Activated naive CD4-positive, alpha-beta T cell treated with anti-CD3 and anti-CD28 coated beads for 36 hours (primary cell): ENCODE measurements at regions of chrX and their contacts with region 1.

Region 1: GRCh38 chrX:11908371-11908770 is 150.3 kb downstream of the MSL3 start:
- DNase-seq: peak; percentile 48
- H3K4me3 Mint-ChIP-seq: no peak overlapping the region
- H3K27ac Mint-ChIP-seq: no peak overlapping the region
- H3K4me1 Mint-ChIP-seq: peaks cover 3% of the 10 kb centered on the region
- H3K27me3 Mint-ChIP-seq: no peaks in the 10 kb centered on the region

Region 2: DNA sequence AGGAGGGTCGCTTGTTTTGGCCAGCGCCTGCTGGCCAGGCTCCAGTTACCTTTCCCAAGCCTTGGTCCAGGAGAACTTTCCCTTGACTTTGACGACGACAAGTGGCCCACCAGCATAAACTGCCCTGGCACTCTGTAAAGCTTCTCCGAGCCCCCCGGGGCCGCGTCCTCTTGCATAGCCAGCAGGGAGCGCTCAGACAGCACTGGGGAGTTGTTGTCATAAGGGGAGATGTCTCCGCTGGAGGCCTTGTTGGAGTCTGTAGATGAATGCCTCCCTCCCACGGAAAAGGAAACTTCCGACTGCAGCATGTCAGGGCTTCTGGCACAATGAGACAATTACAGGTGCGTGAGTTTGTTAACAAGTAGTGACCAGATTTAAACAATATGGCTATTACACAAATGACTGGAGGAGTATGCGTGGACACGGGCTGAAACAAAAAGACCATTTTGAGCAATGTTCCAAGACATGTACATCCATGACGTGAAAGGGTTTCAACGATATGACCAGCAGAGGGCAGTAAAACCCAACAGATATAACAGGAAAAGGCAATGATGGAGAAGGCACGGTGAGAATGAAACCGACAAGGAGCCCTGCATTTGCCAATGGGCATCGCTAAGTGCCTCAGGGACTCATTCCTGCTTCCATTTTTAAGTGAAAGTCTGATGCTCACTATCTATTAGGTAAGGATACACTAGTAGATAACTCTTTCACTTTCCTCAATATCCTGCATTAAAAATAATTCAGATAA is 764.3 kb before region 1 on chrX:
- CTCF ChIA-PET with region 1: no interaction called
- intact Hi-C with region 1: loop called (anchors 1 kb)
- DNase-seq: peak; percentile 66
- H3K4me3 Mint-ChIP-seq: no peak overlapping the region
- H3K27ac Mint-ChIP-seq: no peak overlapping the region
- H3K4me1 Mint-ChIP-seq: peaks cover 2% of the 10 kb centered on the region
- H3K27me3 Mint-ChIP-seq: peaks cover 5% of the 10 kb centered on the region

Region 3: GRCh38 chrX:11381464-11381863 is 526.9 kb before region 1 on chrX:
- CTCF ChIA-PET with region 1: no interaction called
- intact Hi-C with region 1: no loop called
- DNase-seq: peak; percentile 5
- H3K4me3 Mint-ChIP-seq: no peak overlapping the region
- H3K27ac Mint-ChIP-seq: no peak overlapping the region
- H3K4me1 Mint-ChIP-seq: peaks cover 1% of the 10 kb centered on the region
- H3K27me3 Mint-ChIP-seq: peaks cover 2% of the 10 kb centered on the region

Region 4: GRCh38 chrX:11648705-11649519 is 259.5 kb before region 1 on chrX:
- CTCF ChIA-PET with region 1: no interaction called
- intact Hi-C with region 1: no loop called
- DNase-seq: no peak
- H3K4me3 Mint-ChIP-seq: no peak overlapping the region
- H3K27ac Mint-ChIP-seq: no peak overlapping the region
- H3K4me1 Mint-ChIP-seq: no peaks in the 10 kb centered on the region
- H3K27me3 Mint-ChIP-seq: peaks cover 2% of the 10 kb centered on the region

Region 5: DNA sequence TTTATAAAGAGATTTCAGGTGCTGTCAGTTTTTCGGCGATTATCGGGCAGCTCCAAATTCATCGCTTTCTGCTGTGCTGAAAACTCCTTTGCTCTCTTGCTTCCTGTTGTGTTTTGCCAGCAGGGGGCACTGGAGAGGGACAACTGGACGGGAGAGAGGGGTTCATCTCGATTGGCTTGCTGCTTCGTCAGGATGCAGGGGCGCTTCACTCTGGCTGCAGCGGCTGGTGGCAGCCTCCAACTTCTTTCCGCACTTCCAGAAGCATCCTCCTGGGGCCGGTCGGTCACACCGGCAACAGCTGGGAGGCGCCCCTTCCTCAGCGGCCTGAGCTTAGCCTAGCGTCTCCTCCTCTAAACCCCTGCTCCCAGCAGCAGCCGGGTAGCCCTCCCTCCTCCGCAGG is 120.8 kb before region 1 on chrX:
- CTCF ChIA-PET with region 1: interaction called, 12 read pairs
- intact Hi-C with region 1: loop called (anchors 1 kb)
- DNase-seq: peak; percentile 89
- H3K4me3 Mint-ChIP-seq: peak overlapping the region; percentile 56
- H3K27ac Mint-ChIP-seq: peak overlapping the region; percentile 30
- H3K4me1 Mint-ChIP-seq: peaks cover 37% of the 10 kb centered on the region
- H3K27me3 Mint-ChIP-seq: no peaks in the 10 kb centered on the region

Region 6: DNA sequence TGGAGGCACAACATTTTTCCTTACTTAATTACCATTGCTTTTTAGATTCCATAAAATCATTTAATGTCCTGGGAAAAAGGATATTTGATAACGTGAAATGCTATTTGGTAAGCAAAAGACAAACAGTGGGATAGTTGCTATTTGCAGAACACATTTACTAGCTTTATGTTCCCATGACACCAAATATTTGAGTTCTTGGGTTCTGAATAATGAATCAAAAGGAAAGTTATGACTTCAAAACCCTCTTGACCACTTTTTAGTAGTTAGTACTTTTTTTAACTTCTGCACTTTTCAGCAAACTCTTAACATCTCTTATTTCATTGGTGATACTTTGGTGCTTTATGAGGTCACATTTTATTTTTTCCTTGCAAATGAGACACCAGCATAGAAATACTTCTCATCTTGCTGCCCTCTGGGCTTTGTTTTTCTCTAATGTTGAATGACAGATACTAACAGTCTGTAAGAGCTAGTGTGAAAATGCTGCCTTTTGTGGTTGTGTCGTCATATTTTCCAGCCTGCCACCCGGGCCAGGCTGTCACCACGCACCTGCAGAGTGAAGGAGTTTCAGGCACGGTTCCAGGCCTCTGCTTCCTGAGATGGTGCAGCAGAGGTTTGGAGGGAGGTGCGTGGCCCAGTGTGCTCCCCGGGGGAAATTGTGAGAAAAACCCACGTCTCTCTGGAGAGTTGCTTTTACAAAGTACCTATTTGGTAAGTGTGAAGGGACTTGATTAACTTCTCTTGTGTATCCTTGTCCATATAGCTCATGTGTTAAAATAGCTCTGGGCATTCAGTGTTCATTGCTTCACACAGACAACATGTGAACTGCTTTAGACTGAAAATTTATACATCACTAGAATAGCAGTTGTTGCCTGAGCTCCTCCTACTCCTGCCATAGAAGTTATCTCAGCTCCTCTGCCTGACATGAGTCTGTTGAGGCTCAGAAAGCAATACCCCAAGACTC is 115.6 kb before region 1 on chrX:
- CTCF ChIA-PET with region 1: interaction called, 12 read pairs
- intact Hi-C with region 1: loop called (anchors 1 kb)
- DNase-seq: peak; percentile 84
- H3K4me3 Mint-ChIP-seq: peak overlapping the region; percentile 11
- H3K27ac Mint-ChIP-seq: peak overlapping the region; percentile 85
- H3K4me1 Mint-ChIP-seq: peaks cover 44% of the 10 kb centered on the region
- H3K27me3 Mint-ChIP-seq: no peaks in the 10 kb centered on the region

Region 7: DNA sequence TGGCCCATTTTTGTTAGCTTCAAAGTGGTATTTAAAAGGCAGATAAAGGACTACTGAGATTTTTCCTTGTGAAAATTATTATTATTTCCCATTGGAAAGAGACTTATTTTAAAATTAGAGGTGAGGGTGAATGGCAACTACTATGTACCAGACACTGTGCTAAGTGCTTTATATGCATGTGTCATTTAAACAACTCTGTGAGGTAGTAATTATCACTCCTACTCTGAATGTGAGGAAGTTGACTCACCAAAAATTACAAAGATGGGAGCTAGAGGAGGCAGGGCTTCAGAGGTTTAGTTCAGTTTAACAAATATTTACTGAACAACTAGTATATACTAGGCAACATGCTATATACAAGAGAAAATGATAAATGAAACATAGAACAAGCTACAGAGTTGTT is 72.1 kb before region 1 on chrX:
- CTCF ChIA-PET with region 1: no interaction called
- intact Hi-C with region 1: loop called (anchors 5 kb)
- DNase-seq: no peak
- H3K4me3 Mint-ChIP-seq: no peak overlapping the region
- H3K27ac Mint-ChIP-seq: no peak overlapping the region
- H3K4me1 Mint-ChIP-seq: peaks cover 16% of the 10 kb centered on the region
- H3K27me3 Mint-ChIP-seq: no peaks in the 10 kb centered on the region